Caco-2 (cell line): ENCODE measurements at regions of chr6 and their contacts with region 1.

Region 1: DNA sequence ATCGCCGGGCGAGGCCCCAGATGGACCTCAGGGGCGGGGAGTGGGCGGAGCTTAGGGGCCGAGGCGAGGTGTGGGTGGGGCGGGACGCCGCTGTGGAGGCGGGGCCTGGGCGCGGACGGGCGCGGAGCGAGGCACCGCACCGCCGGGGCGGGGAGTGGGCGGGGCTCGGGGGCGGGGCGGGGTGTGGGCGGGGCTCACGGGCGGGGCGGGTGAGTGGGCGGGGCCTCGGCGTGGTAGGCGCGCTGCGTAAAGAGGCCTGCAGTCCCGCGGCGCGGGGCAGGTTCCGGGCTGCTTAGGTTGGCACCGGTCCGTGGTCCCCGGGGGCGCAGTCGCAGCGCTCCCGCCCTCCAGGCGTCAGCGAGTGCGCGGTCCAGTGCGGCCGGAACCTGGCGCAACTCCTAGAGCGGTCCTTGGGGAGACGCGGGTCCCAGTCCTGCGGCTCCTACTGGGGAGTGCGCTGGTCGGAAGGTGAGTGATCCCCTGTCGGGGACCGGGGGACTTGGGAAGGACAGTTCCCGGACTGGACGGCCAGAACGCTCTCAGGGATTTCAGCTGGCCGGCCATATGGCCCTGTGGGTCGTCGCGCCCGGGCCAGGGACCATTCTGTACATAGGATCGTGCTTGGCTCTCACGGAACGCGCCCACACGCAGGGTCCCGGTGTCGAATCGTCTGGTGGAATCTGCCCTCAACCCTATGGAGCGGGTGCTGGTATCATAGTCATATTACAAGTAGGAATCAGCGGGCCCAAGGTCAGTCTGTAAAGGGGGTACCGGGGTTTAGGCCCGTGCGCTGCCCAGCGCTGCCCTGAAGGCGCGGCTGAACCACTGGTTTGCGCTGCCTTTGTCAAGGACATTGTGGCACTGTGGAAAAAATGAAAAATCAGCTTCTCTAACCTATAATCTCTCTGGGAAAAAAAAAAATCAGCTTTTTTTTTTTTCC is at the start of gene NQO2:
- DNase-seq: peak; percentile 91 to 95
- H3K4me3 ChIP-seq: peak within 1 kb of the TSS; percentile 62
- H3K4me3 Mint-ChIP-seq: peak within 1 kb of the TSS; percentile 83
- H3K27ac Mint-ChIP-seq: peak within 1 kb of the TSS; percentile 72
- H3K4me1 ChIP-seq: no peaks in the 10 kb centered on the region
- H3K4me1 Mint-ChIP-seq: peaks cover 7% of the 10 kb centered on the region
- H3K27me3 ChIP-seq: no peaks in the 10 kb centered on the region
- H3K27me3 Mint-ChIP-seq: no peaks in the 10 kb centered on the region
- CTCF ChIP-seq: peak in 1 of 2 experiments; percentile 0
- total RNA-seq, gene NQO2: 35.8 and 37.2 TPM in 2 replicates

Region 2: DNA sequence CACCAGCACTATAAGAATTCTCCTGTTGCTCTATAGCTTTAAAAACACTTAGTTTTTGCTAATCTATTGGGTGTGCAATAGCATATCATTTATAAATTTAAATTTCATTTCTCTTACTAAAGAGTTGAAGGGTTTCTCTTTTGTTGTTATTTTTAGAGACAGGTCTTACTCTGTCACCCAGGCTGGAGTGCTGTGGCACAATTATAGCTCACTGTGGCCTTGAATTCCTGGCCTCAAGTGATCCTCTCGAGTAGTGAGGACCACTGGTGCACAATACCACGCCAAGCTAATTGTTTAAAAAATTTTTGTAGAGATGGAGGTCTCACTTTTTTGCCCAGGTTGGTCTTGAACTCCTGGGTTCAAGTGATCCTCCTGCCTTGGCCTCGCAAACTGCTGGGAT is 240.9 kb before region 1 on chr6:
- CTCF ChIA-PET with region 1: no interaction called
- POLR2A ChIA-PET with region 1: no interaction called
- intact Hi-C with region 1: no loop called
- DNase-seq: no peak
- H3K4me3 ChIP-seq: no peak overlapping the region
- H3K4me3 Mint-ChIP-seq: no peak overlapping the region
- H3K27ac Mint-ChIP-seq: no peak overlapping the region
- H3K4me1 ChIP-seq: no peaks in the 10 kb centered on the region
- H3K4me1 Mint-ChIP-seq: no peaks in the 10 kb centered on the region
- H3K27me3 ChIP-seq: no peaks in the 10 kb centered on the region
- H3K27me3 Mint-ChIP-seq: no peaks in the 10 kb centered on the region
- CTCF ChIP-seq: no peak

Region 3: GRCh38 chr6:2791124-2791974 is 208.5 kb before region 1 on chr6:
- CTCF ChIA-PET with region 1: no interaction called
- POLR2A ChIA-PET with region 1: interaction called, 12 read pairs
- intact Hi-C with region 1: no loop called
- DNase-seq: peak; percentile 67 to 74
- H3K4me3 ChIP-seq: no peak overlapping the region
- H3K4me3 Mint-ChIP-seq: no peak overlapping the region
- H3K27ac Mint-ChIP-seq: no peak overlapping the region
- H3K4me1 ChIP-seq: peaks cover 8% of the 10 kb centered on the region; the same call in 1 of the 2 replicates
- H3K4me1 Mint-ChIP-seq: peaks cover 7% of the 10 kb centered on the region
- H3K27me3 ChIP-seq: no peaks in the 10 kb centered on the region
- H3K27me3 Mint-ChIP-seq: no peaks in the 10 kb centered on the region
- CTCF ChIP-seq: peak; percentile 78

Region 4: GRCh38 chr6:2918936-2919335 is 81.0 kb before region 1 on chr6:
- CTCF ChIA-PET with region 1: no interaction called
- POLR2A ChIA-PET with region 1: no interaction called
- intact Hi-C with region 1: no loop called
- DNase-seq: no peak
- H3K4me3 ChIP-seq: no peak overlapping the region
- H3K4me3 Mint-ChIP-seq: no peak overlapping the region
- H3K27ac Mint-ChIP-seq: no peak overlapping the region
- H3K4me1 ChIP-seq: peaks cover 7% of the 10 kb centered on the region
- H3K4me1 Mint-ChIP-seq: peaks cover 23% of the 10 kb centered on the region
- H3K27me3 ChIP-seq: no peaks in the 10 kb centered on the region
- H3K27me3 Mint-ChIP-seq: no peaks in the 10 kb centered on the region
- CTCF ChIP-seq: no peak

Region 5: GRCh38 chr6:2979819-2980464 is 19.9 kb before region 1 on chr6:
- CTCF ChIA-PET with region 1: no interaction called
- POLR2A ChIA-PET with region 1: interaction called, 10 read pairs
- intact Hi-C with region 1: no loop called
- DNase-seq: no peak
- H3K4me3 ChIP-seq: no peak overlapping the region
- H3K4me3 Mint-ChIP-seq: no peak overlapping the region
- H3K27ac Mint-ChIP-seq: peak overlapping the region; percentile 61
- H3K4me1 ChIP-seq: peaks cover 49% of the 10 kb centered on the region
- H3K4me1 Mint-ChIP-seq: peaks cover 26% of the 10 kb centered on the region
- H3K27me3 ChIP-seq: no peaks in the 10 kb centered on the region
- H3K27me3 Mint-ChIP-seq: no peaks in the 10 kb centered on the region
- CTCF ChIP-seq: no peak

Region 6: GRCh38 chr6:3023663-3024483 is 24.0 kb after region 1 on chr6:
- CTCF ChIA-PET with region 1: interaction called, 6 read pairs
- POLR2A ChIA-PET with region 1: interaction called, 23 read pairs
- intact Hi-C with region 1: loop called (anchors 1 kb)
- DNase-seq: peak; percentile 92 to 93
- H3K4me3 ChIP-seq: peak overlapping the region; percentile 59
- H3K4me3 Mint-ChIP-seq: peak overlapping the region; percentile 94
- H3K27ac Mint-ChIP-seq: peak overlapping the region; percentile 92
- H3K4me1 ChIP-seq: peaks cover 10% of the 10 kb centered on the region
- H3K4me1 Mint-ChIP-seq: no peaks in the 10 kb centered on the region
- H3K27me3 ChIP-seq: no peaks in the 10 kb centered on the region
- H3K27me3 Mint-ChIP-seq: no peaks in the 10 kb centered on the region
- CTCF ChIP-seq: no peak

Region 7: DNA sequence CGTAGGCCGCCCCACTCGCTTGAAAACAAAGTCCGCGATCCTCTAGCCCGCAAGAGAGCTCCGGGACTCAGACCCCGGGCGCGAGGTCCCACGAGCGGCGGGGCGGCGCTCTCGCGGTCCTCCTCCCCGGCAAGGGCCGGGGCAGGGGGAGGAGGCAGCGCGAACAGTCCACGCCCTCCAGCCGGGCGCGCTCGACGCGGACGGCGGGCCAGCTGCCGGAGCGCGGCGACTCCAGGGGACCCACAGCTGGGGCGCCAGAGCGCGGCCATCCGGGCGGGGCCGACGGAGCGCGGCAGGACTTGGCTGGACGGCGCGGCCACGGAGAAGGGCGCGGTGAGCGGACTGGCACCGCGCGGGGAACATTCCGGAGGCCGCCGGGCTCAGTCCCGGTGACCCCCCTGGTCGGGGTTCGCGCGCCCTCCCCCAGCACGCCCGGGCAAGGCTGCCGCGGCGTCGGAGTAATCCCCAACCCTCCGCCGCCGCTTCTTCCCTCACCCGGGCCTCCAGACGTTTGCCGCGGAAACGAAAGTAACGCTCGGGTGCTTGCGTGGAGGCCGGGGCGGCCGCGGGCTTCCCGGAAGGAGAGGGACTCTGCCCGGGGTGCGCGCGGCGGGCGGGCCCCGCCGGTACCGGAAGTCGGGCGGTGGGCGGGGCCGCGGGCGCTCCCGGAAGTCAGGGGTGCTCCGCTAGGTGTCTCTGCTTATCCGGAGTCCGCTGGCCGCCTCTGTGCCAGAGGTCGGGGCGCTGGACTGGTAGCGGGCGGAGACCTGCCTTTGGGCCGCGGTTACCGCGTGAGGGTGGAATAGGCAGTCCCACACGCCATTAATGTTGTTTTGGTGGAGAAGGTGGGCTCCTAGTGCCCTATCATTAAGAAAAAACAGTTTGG is 68.7 kb after region 1 on chr6 and contains the start of gene RIPK1:
- CTCF ChIA-PET with region 1: interaction called, 12 read pairs
- POLR2A ChIA-PET with region 1: interaction called, 23 read pairs
- intact Hi-C with region 1: no loop called
- DNase-seq: peak; percentile 94 to 97
- H3K4me3 ChIP-seq: peak within 1 kb of the TSS; percentile 94
- H3K4me3 Mint-ChIP-seq: peak within 1 kb of the TSS; percentile 81
- H3K27ac Mint-ChIP-seq: peak within 1 kb of the TSS; percentile 79
- H3K4me1 ChIP-seq: peaks cover 9% of the 10 kb centered on the region; the same call in 1 of the 2 replicates
- H3K4me1 Mint-ChIP-seq: peaks cover 6% of the 10 kb centered on the region
- H3K27me3 ChIP-seq: no peaks in the 10 kb centered on the region
- H3K27me3 Mint-ChIP-seq: no peaks in the 10 kb centered on the region
- CTCF ChIP-seq: peak; percentile 26 to 37
- total RNA-seq, gene RIPK1: 15.5 and 15.6 TPM in 2 replicates

Region 8: DNA sequence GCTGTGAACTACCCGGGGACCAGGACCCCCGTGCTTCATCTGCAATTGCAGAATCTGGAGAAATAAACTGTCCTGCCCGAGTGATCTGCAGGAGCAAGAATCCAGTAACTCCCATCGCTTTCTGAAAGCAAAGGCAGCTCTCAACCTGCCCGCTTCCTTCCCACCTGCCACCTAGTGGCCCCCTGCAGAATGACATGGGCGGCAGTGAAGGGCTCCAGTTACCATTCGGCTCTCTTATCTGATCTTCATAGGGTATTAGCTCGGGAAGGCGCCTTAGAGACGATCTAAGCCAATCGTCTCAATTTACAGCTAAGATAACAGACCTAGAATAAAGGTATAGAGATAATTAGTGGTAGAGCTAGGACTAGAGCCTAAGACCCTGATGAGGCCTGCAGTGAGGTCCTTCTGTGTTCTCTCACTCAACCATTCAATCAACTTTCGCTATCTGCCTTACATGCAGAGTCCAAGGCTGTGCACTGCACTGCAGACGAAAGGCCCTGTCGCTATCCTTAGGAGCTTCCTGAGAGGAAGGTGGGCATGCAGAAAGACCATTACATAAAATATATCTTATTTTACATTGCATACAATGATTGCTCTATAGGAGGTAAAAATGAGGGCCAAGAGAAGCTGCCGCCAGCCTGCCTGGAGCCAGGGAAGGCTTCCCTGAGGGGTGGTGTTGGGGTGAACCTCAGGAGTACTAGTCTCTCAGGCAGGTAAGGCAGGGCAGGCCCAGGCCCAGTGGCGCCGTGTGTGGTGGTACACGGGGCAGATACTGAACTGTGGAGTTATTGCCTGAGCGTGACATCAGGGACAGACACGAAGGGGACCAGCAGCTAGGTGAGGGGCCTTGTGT is 251.8 kb after region 1 on chr6:
- CTCF ChIA-PET with region 1: no interaction called
- POLR2A ChIA-PET with region 1: interaction called, 8 read pairs
- intact Hi-C with region 1: loop called (anchors 5 kb)
- DNase-seq: peak; percentile 84 to 91
- H3K4me3 ChIP-seq: no peak overlapping the region
- H3K4me3 Mint-ChIP-seq: peak overlapping the region; percentile 59
- H3K27ac Mint-ChIP-seq: peak overlapping the region; percentile 31
- H3K4me1 ChIP-seq: peaks cover 18% of the 10 kb centered on the region
- H3K4me1 Mint-ChIP-seq: peaks cover 5% of the 10 kb centered on the region
- H3K27me3 ChIP-seq: no peaks in the 10 kb centered on the region; the same call in 1 of the 2 replicates
- H3K27me3 Mint-ChIP-seq: no peaks in the 10 kb centered on the region
- CTCF ChIP-seq: peak; percentile 95 to 96